ENCODE measurements at regions of chr16 and their contacts with region 1.

Region 1: GRCh38 chr16:57300387-57301125 is 16.1 kb upstream of the PLLP start:
- DNase-seq: peak; percentile 99

Region 2: GRCh38 chr16:57185944-57186871 is 114.3 kb before region 1 on chr16 and contains the starts of genes PSME3IP1 and RSPRY1:
- intact Hi-C with region 1: loop called (anchors 5 kb)
- DNase-seq: peak; percentile 100
- total RNA-seq, gene PSME3IP1: 58.1 TPM
- total RNA-seq, gene RSPRY1: 17.1 TPM

Region 3: GRCh38 chr16:57372372-57373116 is 72.0 kb after region 1 on chr16 and contains the start of gene CX3CL1:
- intact Hi-C with region 1: loop called (anchors 2 kb)
- DNase-seq: peak; percentile 88
- total RNA-seq, gene CX3CL1: 8.7 TPM

Region 4: DNA sequence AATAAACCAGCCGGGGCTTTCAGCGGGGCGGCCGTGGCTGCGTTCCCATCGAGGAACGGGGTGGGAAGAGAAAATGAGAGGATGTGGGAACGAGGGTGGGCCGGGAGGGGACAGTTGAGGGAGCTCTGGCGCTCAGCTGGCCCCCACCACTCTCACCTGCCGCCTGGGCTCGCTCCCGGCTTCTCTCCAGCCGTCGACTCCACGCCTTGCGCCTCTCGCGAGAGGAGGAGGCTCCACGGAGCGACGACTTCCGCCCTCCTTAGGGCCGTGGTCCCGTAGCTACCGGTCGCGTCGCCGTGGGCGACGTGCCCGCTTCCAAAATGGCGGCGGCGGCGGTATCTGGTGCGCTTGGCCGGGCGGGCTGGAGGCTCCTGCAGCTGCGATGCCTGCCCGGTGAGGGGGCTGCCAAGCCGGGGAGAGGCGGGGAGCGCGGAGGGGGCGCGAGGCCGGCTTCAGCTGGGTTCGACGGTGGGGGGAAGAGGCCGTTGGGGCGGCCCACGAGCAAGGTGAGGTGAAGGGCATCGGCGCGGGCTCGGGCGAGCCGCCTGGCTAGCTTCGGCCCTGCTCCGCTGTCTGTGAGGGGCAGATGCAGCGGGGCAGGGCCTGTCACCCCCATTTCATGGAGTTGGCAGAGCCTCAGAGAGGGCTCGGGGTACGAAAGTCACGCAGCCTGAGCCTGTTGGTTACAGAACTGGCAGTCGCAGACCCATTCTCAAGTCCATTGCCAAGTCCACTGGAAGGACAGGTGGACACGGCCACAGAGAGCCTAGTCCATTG is 146.8 kb after region 1 on chr16 and contains the starts of genes CIAPIN1 and COQ9:
- intact Hi-C with region 1: loop called (anchors 1 kb)
- DNase-seq: peak; percentile 98
- total RNA-seq, gene CIAPIN1: 60.1 TPM
- total RNA-seq, gene COQ9: 156 TPM